ENCODE measurements at regions of chr3 and their contacts with region 1.

Region 1: GRCh38 chr3:8441969-8442559 is 59.6 kb upstream of the LMCD1 start:
- DNase-seq: no peak
- H3K4me3 ChIP-seq: no peak overlapping the region
- CTCF ChIP-seq: peak; percentile 58

Region 2: DNA sequence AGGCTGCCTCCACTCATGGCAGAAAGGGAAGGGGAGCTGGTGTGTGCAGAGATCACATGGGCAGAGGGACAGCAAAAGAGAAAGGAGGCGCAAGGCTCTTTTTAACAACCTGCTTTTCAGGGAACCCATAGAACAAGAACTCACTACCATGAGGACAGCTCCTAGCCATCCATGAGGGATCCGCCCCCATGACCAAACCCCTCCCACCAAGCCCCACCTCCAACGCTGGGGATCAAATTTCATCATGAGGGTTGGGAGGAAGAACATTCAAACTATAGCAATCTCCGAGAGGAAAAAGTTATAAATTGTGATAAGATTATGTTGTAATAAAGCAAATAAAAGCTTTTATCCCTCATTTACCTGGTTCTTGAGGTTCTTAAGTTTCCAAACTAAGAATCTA is 25.1 kb before region 1 on chr3:
- CTCF ChIA-PET with region 1: interaction called, 30 read pairs
- POLR2A ChIA-PET with region 1: no interaction called
- DNase-seq: no peak
- H3K4me3 ChIP-seq: no peak overlapping the region
- CTCF ChIP-seq: no peak

Region 3: GRCh38 chr3:8458711-8459110 is 16.6 kb after region 1 on chr3:
- CTCF ChIA-PET with region 1: interaction called, 19 read pairs
- POLR2A ChIA-PET with region 1: interaction called, 17 read pairs
- DNase-seq: peak; percentile 98
- H3K4me3 ChIP-seq: no peak overlapping the region
- CTCF ChIP-seq: no peak

Region 4: GRCh38 chr3:8490079-8490552 is 48.1 kb after region 1 on chr3:
- CTCF ChIA-PET with region 1: interaction called, 10 read pairs
- POLR2A ChIA-PET with region 1: interaction called, 9 read pairs
- DNase-seq: peak; percentile 98
- H3K4me3 ChIP-seq: no peak overlapping the region
- CTCF ChIP-seq: no peak

Region 5: GRCh38 chr3:8579096-8579495 is 137.0 kb after region 1 on chr3:
- CTCF ChIA-PET with region 1: interaction called, 11 read pairs
- POLR2A ChIA-PET with region 1: interaction called, 4 read pairs
- DNase-seq: no peak
- H3K4me3 ChIP-seq: no peak overlapping the region
- CTCF ChIP-seq: no peak

Region 6: GRCh38 chr3:8599146-8599545 is 157.1 kb after region 1 on chr3:
- CTCF ChIA-PET with region 1: interaction called, 19 read pairs
- POLR2A ChIA-PET with region 1: no interaction called
- DNase-seq: no peak
- H3K4me3 ChIP-seq: no peak overlapping the region
- CTCF ChIP-seq: no peak

Region 7: GRCh38 chr3:8622873-8623691 is 181.0 kb after region 1 on chr3:
- CTCF ChIA-PET with region 1: interaction called, 149 read pairs
- POLR2A ChIA-PET with region 1: interaction called, 3 read pairs
- DNase-seq: no peak
- H3K4me3 ChIP-seq: no peak overlapping the region
- CTCF ChIP-seq: peak; percentile 95

Region 8: GRCh38 chr3:8800016-8800415 is 358.0 kb after region 1 on chr3:
- CTCF ChIA-PET with region 1: no interaction called
- POLR2A ChIA-PET with region 1: no interaction called
- DNase-seq: no peak
- H3K4me3 ChIP-seq: no peak overlapping the region
- CTCF ChIP-seq: no peak